ENCODE measurements at regions of chr22 and their contacts with region 1.

Region 1: DNA sequence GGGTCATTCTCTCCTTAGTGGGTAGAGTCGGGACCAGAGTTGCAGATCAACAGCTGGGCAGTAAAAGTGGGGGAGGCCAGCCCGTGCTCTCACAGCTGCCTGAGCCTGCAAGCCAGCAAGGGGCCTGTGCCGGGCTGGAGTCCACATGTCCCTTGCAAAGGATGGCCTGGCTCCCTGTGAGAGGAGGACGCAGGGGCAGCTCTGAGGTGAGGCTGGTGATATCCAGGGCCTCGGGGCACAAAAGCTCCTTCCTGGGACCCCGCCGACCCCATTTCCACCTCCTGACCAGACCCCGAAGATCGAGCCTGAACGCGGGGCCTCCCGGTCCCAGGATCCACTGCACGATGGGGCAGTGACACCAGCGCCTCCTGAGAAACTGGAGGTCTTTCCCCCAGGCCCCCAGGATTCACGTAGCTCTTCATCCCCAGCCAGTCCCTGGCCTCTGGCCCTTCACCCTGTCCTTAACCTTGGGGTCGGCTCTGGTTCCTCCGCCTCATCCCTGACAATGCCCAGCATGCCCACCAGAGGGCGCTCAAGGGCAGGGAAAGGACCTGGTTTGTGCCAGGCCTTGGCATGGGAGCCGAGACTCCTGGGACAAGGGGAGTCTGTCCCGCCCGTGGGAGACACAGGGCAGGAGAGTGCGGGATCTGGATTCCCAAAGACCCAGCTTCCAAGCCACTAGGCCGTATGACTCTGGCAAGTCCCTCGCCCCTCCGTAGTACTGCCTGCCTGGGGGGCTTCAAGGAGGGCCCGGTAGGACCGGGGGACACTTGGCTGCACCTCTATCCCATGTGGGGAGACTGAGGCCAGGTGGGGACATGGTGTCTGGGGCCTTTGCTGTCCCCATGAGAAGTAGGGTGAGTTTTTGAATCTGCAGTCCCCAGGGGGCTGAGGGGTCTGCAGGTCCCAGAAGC is 17.8 kb upstream of the WNT7B start:
- DNase-seq: peak; percentile 90 to 96
- ATAC-seq: peak; percentile 77
- H3K4me3 ChIP-seq: no peak overlapping the region
- H3K27ac ChIP-seq: no peak overlapping the region
- H3K4me1 ChIP-seq: no peaks in the 10 kb centered on the region
- H3K27me3 ChIP-seq: no peaks in the 10 kb centered on the region

Region 2: GRCh38 chr22:46309526-46310085 is 314.9 kb after region 1 on chr22:
- intact Hi-C with region 1: loop called in 1 of 2 experiments (anchors 2 kb)
- DNase-seq: peak in 1 of 2 donors; percentile 4
- ATAC-seq: no peak
- H3K4me3 ChIP-seq: no peak overlapping the region
- H3K27ac ChIP-seq: no peak overlapping the region
- H3K4me1 ChIP-seq: no peaks in the 10 kb centered on the region
- H3K27me3 ChIP-seq: no peaks in the 10 kb centered on the region

Region 3: GRCh38 chr22:46522797-46523196 is 528.0 kb after region 1 on chr22:
- intact Hi-C with region 1: loop called in 1 of 2 experiments (anchors 5 kb)
- DNase-seq: no peak
- ATAC-seq: no peak
- H3K4me3 ChIP-seq: no peak overlapping the region
- H3K27ac ChIP-seq: no peak overlapping the region
- H3K4me1 ChIP-seq: no peaks in the 10 kb centered on the region
- H3K27me3 ChIP-seq: no peaks in the 10 kb centered on the region

Measured in aorta (tissue), 5 donors.